A673 (cell line): ENCODE measurements at regions of chr1 and their contacts with region 1.

Region 1: DNA sequence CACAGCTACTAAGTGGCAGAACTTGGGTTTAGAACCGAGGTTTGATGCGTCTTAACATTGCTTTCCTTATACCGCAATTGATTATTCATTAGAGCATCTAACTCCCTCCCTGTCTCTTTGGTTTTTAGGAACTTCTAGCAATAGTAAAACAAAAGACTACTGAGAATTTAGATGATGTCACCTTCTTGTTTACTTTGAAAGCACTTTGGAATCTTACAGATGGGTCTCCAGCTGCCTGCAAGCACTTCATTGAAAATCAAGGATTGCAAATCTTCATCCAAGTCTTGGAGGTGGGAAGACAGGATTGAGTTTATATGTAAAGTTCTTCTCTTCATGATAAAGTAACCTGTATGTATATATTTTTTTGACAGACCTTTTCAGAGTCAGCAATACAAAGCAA is 35.0 kb downstream of the ZYG11A start:
- DNase-seq: no peak
- H3K4me3 ChIP-seq: no peak overlapping the region
- H3K27ac ChIP-seq: no peak overlapping the region
- H3K4me1 ChIP-seq: no peaks in the 10 kb centered on the region
- H3K27me3 ChIP-seq: no peaks in the 10 kb centered on the region
- CTCF ChIP-seq: no peak

Region 2: DNA sequence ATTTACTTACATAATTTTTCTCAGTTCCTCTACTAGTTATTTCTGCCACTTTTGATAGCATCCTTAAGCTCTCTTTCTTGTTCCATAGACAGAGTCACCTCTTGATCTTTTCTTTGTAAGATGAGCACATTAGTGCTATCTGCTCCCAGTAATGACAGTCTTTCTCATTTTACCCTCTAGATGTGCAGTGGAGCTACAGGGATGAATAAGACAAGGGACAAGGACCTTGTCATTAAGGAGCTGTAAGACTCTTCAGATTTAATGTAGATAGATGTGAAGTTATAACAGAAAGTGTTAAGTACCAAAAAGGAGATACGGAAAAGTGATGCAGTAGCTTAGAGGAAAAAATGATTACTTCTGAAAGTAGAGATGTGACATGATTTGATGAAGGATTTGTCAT is 69.9 kb after region 1 on chr1:
- CTCF ChIA-PET with region 1: interaction called, 12 read pairs
- POLR2A ChIA-PET with region 1: no interaction called
- intact Hi-C with region 1: no loop called
- DNase-seq: no peak
- H3K4me3 ChIP-seq: no peak overlapping the region
- H3K27ac ChIP-seq: no peak overlapping the region
- H3K4me1 ChIP-seq: peaks cover 4% of the 10 kb centered on the region
- H3K27me3 ChIP-seq: no peaks in the 10 kb centered on the region
- CTCF ChIP-seq: no peak